Posterior vena cava (tissue), 2 donors: ENCODE measurements at regions of chr17 and their contacts with region 1.

Region 1: DNA sequence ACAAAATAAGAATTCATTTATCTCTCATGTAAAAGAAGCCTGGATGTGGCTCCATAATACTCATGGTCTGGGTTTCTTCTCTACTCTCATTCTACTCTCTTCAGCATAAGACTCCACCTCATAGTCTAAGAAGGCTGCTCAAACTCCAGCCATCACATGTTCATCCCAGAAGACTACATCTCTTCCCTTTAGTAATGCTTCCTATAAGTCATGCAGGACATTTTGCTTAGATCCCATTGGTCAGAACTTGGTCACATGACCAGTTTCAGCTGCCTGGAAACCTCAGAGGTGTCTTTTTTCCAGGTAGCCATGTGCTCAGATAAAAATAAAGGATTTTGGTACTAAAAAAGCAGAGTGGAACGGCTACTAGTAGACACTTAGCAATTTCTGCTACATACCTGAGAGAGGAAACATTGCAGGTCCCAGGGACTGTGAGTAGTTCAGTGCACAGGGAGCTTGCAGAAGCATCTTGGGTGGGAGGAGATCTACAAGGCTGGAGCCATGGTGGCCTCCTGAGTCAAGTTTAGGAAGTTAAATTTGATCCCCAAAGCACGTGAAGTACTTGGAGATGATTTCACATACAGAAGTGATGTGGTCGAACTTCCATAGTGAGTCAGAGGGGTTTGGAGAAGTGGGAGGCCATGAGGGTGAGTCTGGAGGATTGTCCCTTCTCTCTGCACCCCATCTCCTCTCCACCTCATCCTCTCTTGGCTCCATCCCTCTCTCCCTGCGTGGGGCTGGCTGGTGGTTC is 110.2 kb downstream of the CCDC182 start:
- DNase-seq: peak; percentile 3

Region 2: DNA sequence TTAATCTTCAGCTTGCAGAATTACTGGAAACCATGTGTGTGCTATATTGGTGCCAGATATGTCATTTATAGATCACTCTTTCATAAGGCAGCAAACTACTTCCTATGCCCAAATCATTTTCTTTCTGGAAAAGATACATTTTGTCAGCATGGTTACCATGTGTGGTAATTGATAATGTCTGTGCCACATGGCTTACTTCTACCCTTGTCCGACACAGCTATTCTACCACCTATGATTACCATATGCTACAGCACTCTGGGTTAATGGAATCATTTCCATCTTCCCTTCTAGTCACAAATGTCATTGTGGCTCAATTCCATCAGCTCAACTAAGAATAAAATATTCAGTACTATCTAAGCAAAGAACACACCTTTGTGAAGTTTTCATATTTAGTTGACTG is 1112.8 kb after region 1 on chr17:
- intact Hi-C with region 1: loop called in 1 of 2 experiments (anchors 5 kb)
- DNase-seq: no peak